Astrocyte of the cerebellum (primary cell): ENCODE measurements at regions of chr2 and their contacts with region 1.

Region 1: GRCh38 chr2:121159291-121160071 is 125.5 kb downstream of the TFCP2L1 start:
- DNase-seq: no peak
- H3K4me3 ChIP-seq: no peak overlapping the region
- CTCF ChIP-seq: no peak

Region 2: GRCh38 chr2:121237980-121238665 is 78.6 kb after region 1 on chr2:
- in situ Hi-C with region 1: loop called (anchors 5 kb)
- DNase-seq: peak; percentile 15
- H3K4me3 ChIP-seq: no peak overlapping the region
- CTCF ChIP-seq: no peak